Cardiac septum (tissue), 1 donor: ENCODE measurements at regions of chr6 and their contacts with region 1.

Region 1: DNA sequence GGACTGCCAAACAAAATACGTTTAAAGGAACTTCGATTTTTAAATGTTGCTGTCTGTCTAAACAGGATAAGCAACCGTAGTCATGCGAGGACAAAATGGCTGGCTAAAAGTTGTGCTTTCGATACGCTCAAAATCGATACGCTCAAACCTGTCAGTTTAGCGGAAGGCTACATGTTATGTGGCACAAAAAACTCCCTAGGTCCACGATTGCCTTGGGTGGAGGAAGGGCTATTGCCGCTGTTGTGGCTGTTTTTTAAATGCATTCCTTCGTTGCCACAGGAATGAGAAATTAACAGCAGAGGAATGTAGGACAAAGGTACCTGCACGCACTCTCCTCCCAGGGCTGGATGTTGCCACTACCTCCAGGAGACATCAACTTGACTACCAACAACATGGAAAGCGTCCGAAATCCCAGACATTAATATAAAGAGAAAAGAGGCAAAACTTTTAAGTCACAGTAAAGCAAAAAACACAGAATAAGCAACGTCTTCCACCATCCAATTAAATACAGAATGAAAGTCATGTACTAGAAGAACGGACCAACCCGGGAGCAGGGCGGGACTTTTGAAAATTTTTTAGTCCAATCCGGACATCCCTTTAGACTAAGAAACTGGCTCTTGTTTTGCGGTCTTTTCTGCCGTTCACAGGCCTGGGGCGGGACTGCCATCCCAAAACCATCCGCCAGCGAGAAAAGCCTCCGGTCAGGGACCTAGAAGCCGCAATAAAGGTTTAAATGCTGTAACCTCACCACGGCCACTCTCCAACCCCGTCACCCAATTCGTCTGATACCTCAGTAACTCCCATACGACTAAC is 32.2 kb upstream of the HFE start:
- DNase-seq: peak; percentile 93

Region 2: GRCh38 chr6:25971187-25971811 is 83.8 kb before region 1 on chr6:
- intact Hi-C with region 1: no loop called
- DNase-seq: no peak

Region 3: GRCh38 chr6:26025894-26026832 is 28.9 kb before region 1 on chr6:
- intact Hi-C with region 1: loop called (anchors 1 kb)
- DNase-seq: peak; percentile 97

Region 4: DNA sequence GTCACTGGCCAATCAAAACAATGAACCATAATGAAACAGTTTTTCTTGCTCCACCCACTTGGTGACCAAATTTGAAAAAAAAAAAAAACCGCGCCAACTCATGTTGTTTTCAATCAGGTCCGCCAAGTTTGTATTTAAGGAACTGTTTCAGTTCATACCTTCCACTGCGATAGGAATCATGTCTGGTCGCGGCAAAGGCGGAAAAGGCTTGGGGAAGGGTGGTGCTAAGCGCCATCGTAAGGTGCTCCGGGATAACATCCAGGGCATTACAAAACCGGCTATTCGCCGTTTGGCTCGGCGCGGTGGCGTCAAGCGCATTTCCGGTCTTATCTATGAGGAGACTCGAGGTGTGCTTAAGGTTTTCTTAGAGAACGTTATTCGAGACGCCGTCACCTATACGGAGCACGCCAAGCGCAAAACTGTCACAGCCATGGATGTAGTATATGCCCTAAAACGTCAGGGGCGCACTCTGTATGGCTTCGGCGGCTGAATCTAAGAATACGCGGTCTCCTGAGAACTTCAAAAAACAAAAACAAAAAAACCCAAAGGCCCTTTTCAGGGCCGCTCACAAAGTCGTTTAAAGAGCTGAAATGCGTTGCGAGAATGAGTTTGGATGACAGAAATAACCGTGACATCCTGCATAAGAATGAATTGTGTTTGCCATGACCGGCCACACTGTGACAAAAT is 48.9 kb after region 1 on chr6:
- intact Hi-C with region 1: loop called (anchors 2 kb)
- DNase-seq: peak; percentile 92

Region 5: GRCh38 chr6:26342106-26343004 is 287.3 kb after region 1 on chr6:
- intact Hi-C with region 1: no loop called
- DNase-seq: no peak

Region 6: GRCh38 chr6:26640806-26641205 is 585.7 kb after region 1 on chr6:
- intact Hi-C with region 1: no loop called
- DNase-seq: no peak